ENCODE measurements at regions of chr2 and their contacts with region 1.

Region 1: DNA sequence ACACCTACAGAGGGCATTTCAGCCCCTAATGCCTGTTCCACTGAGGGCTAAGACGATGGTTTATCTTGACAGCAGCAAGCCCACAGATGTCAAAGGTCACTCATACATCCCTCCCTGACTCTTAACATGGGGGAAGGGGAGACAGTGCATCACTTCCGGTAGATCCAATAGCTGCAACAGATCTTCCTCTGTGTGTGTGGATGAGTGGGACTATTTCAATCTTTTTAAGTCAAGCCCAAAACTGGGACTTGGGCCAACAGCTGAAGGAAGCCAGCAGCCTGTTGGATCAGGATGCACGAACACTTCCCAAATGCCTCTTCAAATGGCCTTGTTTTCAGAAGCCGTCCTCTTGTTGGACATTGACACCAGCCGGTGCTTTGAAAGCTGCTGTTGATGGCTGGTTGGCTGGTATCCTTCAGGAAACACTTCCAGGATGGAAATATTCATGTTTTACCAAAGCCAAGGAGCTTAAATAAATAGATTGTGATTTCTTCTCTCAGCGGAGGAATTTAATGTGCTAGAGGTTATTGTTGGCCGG is 59.2 kb downstream of the IL1R2 start:
- DNase-seq: peak; percentile 28
- H3K4me3 Mint-ChIP-seq: no peak overlapping the region
- H3K27ac Mint-ChIP-seq: peak overlapping the region; percentile 82
- H3K4me1 Mint-ChIP-seq: peaks cover 31% of the 10 kb centered on the region
- H3K27me3 Mint-ChIP-seq: no peaks in the 10 kb centered on the region
- CTCF ChIP-seq: no peak

Region 2: DNA sequence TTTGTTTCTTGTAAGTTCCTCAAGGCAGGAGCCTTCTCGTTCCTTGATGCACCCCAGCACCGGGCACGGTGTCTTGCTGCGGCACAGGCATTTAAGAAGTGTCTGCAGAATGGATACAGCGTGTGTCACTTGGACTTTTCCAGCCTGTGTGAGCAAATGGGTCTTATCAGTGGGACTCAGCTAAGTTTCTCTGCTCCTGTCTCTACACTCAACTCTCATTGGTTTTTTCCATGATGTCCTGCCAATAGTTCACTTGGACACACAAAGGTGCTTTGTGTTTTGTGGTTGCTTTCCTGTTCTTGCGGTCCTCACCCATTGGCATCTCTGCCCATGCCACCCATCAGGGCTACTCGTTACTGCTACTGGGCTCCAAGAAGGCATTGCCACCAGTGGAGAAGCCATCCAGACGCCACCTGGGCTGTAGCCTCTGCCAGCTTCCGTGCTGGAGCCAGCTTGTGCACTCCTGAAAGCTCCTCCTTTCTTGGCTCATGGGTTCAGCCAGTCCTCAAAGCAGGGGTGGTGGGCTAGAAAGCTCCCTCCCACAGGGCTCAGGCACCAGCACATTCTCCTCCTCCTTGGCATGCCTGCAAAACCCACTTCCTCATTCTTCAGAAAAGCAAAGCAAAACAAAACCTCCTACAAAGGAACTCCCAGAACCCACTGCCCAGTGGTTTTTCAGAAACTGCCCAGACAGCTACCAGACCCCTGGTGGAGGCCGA is 17.7 kb before region 1 on chr2:
- CTCF ChIA-PET with region 1: interaction called, 6 read pairs
- POLR2A ChIA-PET with region 1: interaction called, 25 read pairs
- intact Hi-C with region 1: no loop called
- DNase-seq: peak; percentile 77
- H3K4me3 Mint-ChIP-seq: peak overlapping the region; percentile 54
- H3K27ac Mint-ChIP-seq: peak overlapping the region; percentile 86
- H3K4me1 Mint-ChIP-seq: peaks cover 21% of the 10 kb centered on the region
- H3K27me3 Mint-ChIP-seq: no peaks in the 10 kb centered on the region
- CTCF ChIP-seq: no peak

Region 3: GRCh38 chr2:102098756-102099155 is 47.8 kb after region 1 on chr2:
- CTCF ChIA-PET with region 1: no interaction called
- POLR2A ChIA-PET with region 1: no interaction called
- intact Hi-C with region 1: no loop called
- DNase-seq: no peak
- H3K4me3 Mint-ChIP-seq: no peak overlapping the region
- H3K27ac Mint-ChIP-seq: no peak overlapping the region
- H3K4me1 Mint-ChIP-seq: peaks cover 25% of the 10 kb centered on the region
- H3K27me3 Mint-ChIP-seq: no peaks in the 10 kb centered on the region
- CTCF ChIP-seq: no peak

Measured in MCF 10A (cell line).